GM18951 (cell line): ENCODE measurements at regions of chr20 and their contacts with region 1.

Region 1: DNA sequence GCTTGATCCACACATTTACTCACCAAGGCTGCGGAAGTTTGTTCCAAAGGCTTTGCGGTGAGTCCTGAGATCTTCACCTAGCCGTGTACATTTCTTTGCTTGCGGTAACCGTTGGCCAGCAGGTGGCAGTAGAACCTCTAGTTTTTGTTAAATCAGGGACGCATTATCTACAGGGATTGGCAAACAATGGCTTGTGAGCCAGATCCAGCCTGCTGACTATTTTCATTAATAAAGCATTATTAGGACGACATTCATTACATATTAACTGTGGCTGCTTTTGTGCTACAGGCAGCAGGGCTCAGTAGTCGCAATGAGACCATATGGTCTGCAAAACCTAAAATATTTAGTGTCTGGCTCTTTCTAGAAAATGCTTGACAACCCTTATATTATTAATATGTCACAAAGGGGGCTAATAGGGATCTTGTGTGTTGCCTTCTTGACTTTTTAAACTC is 174.1 kb downstream of the DOK5 start:
- POLR2A ChIP-seq: no peak

Region 2: GRCh38 chr20:54219751-54220426 is 429.6 kb before region 1 on chr20:
- in situ Hi-C with region 1: loop called (anchors 5 kb)
- POLR2A ChIP-seq: no peak

Region 3: GRCh38 chr20:54772453-54772852 is 122.9 kb after region 1 on chr20:
- in situ Hi-C with region 1: no loop called
- POLR2A ChIP-seq: no peak

Region 4: GRCh38 chr20:56358596-56359211 is 1709.2 kb after region 1 on chr20 and contains the start of gene FAM210B:
- in situ Hi-C with region 1: no loop called
- POLR2A ChIP-seq: peak; percentile 37